ENCODE measurements at regions of chr1 and their contacts with region 1.

Region 1: DNA sequence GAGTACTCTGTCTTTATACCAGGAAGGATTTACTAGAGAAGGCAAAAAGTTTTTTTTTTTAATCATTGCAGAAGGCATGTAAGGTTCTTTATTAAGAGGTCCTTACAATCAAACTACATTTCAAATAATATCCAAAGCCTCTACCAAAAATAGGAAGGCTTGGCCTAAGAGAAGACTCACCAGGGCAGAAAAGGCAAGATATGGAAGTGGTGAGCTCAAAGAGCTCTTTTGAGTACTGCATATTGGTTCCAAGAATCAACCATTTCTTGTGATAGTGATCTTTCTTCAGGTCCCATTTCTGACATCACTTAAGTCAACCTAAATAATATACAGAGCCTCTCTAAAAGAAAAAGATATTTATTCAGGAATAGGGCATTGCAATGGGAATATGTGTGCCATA is 153.2 kb downstream of the FASLG start:
- DNase-seq: no peak
- H3K4me3 ChIP-seq: no peak overlapping the region
- H3K27ac ChIP-seq: no peak overlapping the region
- H3K4me1 ChIP-seq: no peaks in the 10 kb centered on the region
- H3K27me3 ChIP-seq: no peaks in the 10 kb centered on the region
- CTCF ChIP-seq: no peak
- POLR2A ChIP-seq: no peak

Region 2: GRCh38 chr1:172775616-172776015 is 36.5 kb before region 1 on chr1:
- intact Hi-C with region 1: loop called (anchors 2 kb)
- DNase-seq: no peak
- H3K4me3 ChIP-seq: peak overlapping the region in 1 of 3 donors; percentile 12
- H3K27ac ChIP-seq: no peak overlapping the region
- H3K4me1 ChIP-seq: no peaks in the 10 kb centered on the region
- H3K27me3 ChIP-seq: no peaks in the 10 kb centered on the region
- CTCF ChIP-seq: no peak
- POLR2A ChIP-seq: no peak

Region 3: DNA sequence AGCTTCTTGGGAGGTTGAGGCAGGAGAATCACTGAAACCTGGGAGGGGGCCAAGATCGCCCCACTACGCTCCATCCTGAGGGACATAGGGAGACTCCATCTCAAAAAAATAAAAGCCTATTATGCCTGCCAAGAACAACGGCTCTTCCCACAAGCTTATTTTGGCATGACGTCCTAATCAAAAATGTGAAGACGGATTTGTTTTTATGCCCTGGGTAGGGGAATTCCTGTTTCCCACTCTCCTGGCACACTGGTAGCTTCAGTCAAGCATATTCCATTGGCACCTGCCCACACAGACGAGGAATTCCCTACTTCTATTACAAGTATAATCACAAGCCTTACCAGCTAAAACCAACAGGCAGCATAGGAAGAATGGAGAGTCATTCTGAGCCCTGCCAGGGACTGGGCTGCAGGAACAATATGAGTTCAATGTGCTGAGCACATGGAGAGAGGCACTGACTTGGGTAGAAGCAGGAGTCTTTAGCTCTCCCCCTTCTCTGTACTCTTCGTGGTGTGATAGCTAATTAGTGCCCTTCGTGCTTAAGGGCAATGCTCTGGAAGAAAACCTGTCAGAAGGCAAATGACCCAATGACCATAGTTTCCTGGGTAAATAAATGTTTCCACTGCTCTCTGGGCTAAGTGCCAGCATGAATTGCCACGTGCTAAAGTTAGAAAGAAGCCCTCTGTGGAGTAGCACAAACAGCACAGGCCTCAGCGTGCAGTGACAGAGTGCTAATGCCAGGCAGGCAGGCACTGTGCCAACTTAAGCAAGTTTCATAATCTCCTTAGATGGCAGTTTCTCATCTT is 378.2 kb after region 1 on chr1:
- intact Hi-C with region 1: no loop called
- DNase-seq: peak; percentile 63 to 92
- H3K4me3 ChIP-seq: no peak overlapping the region
- H3K27ac ChIP-seq: peak overlapping the region; percentile 76 to 84
- H3K4me1 ChIP-seq: peaks cover 0 to 10% of the 10 kb centered on the region in 2 donors
- H3K27me3 ChIP-seq: no peaks in the 10 kb centered on the region
- CTCF ChIP-seq: no peak
- POLR2A ChIP-seq: no peak

Measured in breast epithelium (tissue), 4 donors.